WTC11 (cell line): ENCODE measurements at regions of chr15 and their contacts with region 1.

Region 1: DNA sequence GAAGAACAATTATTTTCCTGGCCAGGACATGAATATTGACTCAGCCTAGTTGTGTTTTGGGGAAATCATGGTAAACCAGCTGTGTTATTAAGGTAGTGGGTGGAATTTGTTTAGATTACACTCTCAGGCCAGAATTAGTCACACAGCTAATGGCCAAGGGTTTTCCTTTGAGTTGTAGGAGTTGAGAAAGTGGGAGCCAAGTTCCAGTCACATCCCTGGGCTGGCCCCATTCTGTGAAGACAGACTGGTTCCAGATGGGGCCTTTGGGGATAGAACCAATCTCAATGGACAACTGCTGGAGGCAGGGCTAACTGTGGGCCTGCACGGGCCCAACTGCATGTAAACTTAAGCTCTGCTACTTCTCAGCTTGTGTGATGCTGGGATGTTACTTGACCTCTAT is 1.4 kb upstream of the RASL12 start:
- DNase-seq: no peak
- ATAC-seq: no peak
- H3K4me3 Mint-ChIP-seq: no peak overlapping the region
- H3K27ac Mint-ChIP-seq: no peak overlapping the region
- H3K4me1 Mint-ChIP-seq: peaks cover 38% of the 10 kb centered on the region
- H3K27me3 Mint-ChIP-seq: peaks cover 21% of the 10 kb centered on the region
- CTCF ChIP-seq: no peak

Region 2: DNA sequence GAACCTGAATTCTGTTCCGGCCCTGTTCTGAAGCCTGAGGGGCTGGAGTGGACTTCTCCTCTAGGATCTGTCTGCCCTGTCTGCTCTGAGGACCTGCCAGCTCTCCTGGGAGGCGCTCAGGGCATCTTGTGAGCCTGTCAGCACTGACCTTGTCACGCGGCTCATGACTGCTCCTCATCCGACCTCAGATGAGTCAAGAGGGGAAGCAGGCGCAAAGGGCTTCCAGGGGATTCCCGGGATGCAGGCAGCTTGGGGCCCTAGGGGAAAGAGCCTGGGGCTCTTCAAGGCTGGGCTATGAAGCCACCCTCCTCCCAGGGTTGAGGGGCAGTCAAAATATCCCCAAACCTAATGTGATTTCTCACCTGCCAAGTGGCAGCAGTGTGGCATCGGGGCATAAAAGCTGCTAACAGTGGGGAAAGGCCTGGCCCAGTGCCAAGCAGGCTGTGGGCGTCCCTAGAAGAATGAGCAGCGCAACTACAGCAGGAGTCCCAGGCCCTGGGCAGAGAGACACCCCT is 185.1 kb before region 1 on chr15:
- CTCF ChIA-PET with region 1: no interaction called
- POLR2A ChIA-PET with region 1: no interaction called
- DNase-seq: no peak
- ATAC-seq: peak; percentile 45
- H3K4me3 Mint-ChIP-seq: no peak overlapping the region
- H3K27ac Mint-ChIP-seq: peak overlapping the region; percentile 7; the same call in 1 of the 2 replicates
- H3K4me1 Mint-ChIP-seq: peaks cover 4% of the 10 kb centered on the region
- H3K27me3 Mint-ChIP-seq: no peaks in the 10 kb centered on the region
- CTCF ChIP-seq: no peak

Region 3: DNA sequence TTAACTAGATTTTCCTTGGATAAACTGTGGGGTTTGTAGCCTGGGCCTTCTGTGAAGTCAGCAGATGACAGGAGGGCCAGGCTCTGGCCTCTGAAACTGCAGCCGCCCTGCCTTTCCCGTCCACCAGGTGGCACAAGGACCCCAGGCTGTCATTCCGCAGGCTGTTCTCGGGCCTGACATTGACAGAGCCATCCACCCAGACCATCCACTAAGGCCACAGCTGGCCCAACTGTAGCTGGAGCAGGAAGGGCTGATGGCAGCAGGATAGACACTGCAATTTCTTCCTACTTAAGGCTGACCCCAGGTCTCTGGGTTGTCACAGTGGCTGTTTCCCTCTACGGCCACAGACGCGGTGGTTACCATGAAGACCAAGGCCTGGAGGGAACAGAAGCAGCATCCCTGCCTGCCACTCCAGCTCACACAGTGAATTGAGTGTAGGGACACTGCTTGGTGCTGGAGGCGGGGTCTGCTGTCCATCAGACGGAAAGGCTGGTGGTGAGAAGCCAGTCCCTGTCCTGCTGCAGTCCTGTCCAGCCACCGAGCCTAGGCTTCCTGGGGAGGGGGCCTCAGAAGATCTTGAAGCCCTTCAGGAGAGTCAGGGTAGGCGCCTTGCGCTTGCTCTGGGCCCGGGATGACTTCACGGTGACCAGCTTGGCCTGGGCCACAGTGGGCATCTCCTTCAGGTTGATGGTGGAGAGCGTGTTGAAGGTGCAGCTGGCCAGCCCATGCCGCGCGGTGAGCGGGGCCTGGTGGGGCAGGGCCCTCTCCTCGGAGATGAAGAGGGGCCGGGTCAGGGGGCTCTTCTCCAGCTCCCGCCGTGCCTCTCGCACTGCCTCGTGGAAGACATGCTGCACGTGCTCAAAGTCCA is 14.6 kb before region 1 on chr15:
- CTCF ChIA-PET with region 1: interaction called, 51 read pairs
- POLR2A ChIA-PET with region 1: interaction called, 7 read pairs
- DNase-seq: peak; percentile 86
- ATAC-seq: peak; percentile 82
- H3K4me3 Mint-ChIP-seq: no peak overlapping the region
- H3K27ac Mint-ChIP-seq: no peak overlapping the region
- H3K4me1 Mint-ChIP-seq: peaks cover 4% of the 10 kb centered on the region; the same call in 1 of the 2 replicates
- H3K27me3 Mint-ChIP-seq: peaks cover 2% of the 10 kb centered on the region; the same call in 1 of the 2 replicates
- CTCF ChIP-seq: peak; percentile 83